B cell (primary cell): ENCODE measurements at regions of chr15 and their contacts with region 1.

Region 1: DNA sequence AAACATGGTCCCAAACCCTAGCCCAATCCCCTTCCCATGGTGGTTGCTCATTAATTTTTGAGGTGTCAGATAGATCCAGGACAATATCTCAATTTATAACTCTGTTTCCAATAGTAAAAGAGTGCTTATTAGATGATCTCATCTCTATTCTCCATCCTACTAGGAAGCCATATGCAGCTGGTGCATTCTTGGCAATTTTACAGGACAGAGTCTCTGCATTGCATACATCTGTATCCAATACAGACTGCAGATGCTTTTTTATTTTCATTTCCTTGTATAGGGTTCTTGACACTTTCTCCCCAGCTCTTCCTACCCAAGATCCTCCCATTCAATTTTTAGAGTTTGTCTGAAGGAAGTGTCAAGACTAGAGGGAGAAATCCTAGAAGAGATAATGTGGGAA is 194.8 kb upstream of the DPH6 start:
- DNase-seq: no peak
- ATAC-seq: no peak
- H3K4me3 ChIP-seq: no peak overlapping the region
- H3K4me3 Mint-ChIP-seq: no peak overlapping the region
- H3K27ac ChIP-seq: no peak overlapping the region
- H3K27ac Mint-ChIP-seq: no peak overlapping the region
- H3K4me1 ChIP-seq: no peaks in the 10 kb centered on the region
- H3K4me1 Mint-ChIP-seq: no peaks in the 10 kb centered on the region
- H3K27me3 ChIP-seq: no peaks in the 10 kb centered on the region
- H3K27me3 Mint-ChIP-seq: peaks cover 6% of the 10 kb centered on the region
- CTCF ChIP-seq: no peak

Region 2: GRCh38 chr15:35751413-35752133 is 10.8 kb after region 1 on chr15:
- CTCF ChIA-PET with region 1: interaction called, 12 read pairs
- POLR2A ChIA-PET with region 1: no interaction called
- intact Hi-C with region 1: no loop called
- DNase-seq: peak; percentile 37
- ATAC-seq: no peak
- H3K4me3 ChIP-seq: no peak overlapping the region
- H3K4me3 Mint-ChIP-seq: no peak overlapping the region
- H3K27ac ChIP-seq: no peak overlapping the region
- H3K27ac Mint-ChIP-seq: no peak overlapping the region
- H3K4me1 ChIP-seq: no peaks in the 10 kb centered on the region
- H3K4me1 Mint-ChIP-seq: no peaks in the 10 kb centered on the region
- H3K27me3 ChIP-seq: no peaks in the 10 kb centered on the region
- H3K27me3 Mint-ChIP-seq: no peaks in the 10 kb centered on the region
- CTCF ChIP-seq: peak; percentile 74

Region 3: DNA sequence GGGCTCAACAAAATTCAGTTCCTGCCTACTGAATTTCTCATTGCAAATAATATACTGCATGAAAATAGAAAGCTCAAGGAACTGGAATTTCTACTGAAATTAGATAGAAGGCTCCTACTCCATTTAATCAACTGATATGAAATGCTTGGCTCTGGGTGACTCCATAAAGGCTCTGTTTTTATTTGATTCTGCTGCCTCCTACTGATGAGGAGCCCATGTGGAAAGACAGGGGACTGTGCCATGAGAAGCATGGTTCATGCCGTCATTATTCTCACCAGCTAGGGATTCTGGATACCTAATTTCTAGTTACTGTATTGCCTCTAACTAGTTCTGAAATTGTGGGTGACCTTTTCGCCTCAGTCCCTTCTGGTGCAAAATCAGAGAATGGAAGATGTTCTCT is 171.4 kb after region 1 on chr15:
- CTCF ChIA-PET with region 1: no interaction called
- POLR2A ChIA-PET with region 1: no interaction called
- intact Hi-C with region 1: no loop called
- DNase-seq: no peak
- ATAC-seq: no peak
- H3K4me3 ChIP-seq: no peak overlapping the region
- H3K4me3 Mint-ChIP-seq: no peak overlapping the region
- H3K27ac ChIP-seq: no peak overlapping the region
- H3K27ac Mint-ChIP-seq: no peak overlapping the region
- H3K4me1 ChIP-seq: no peaks in the 10 kb centered on the region
- H3K4me1 Mint-ChIP-seq: no peaks in the 10 kb centered on the region
- H3K27me3 ChIP-seq: no peaks in the 10 kb centered on the region
- H3K27me3 Mint-ChIP-seq: no peaks in the 10 kb centered on the region
- CTCF ChIP-seq: no peak